T-cell (primary cell): ENCODE measurements at regions of chr10 and their contacts with region 1.

Region 1: GRCh38 chr10:77898647-77899477 is 27.7 kb downstream of the DLG5 start:
- DNase-seq: no peak
- ATAC-seq: no peak
- H3K4me3 ChIP-seq: no peak overlapping the region
- H3K4me3 Mint-ChIP-seq: no peak overlapping the region
- H3K27ac ChIP-seq: no peak overlapping the region
- H3K27ac Mint-ChIP-seq: no peak overlapping the region
- H3K4me1 ChIP-seq: no peaks in the 10 kb centered on the region
- H3K4me1 Mint-ChIP-seq: no peaks in the 10 kb centered on the region
- H3K27me3 ChIP-seq: peaks cover 0 to 5% of the 10 kb centered on the region in 2 experiments
- H3K27me3 Mint-ChIP-seq: peaks cover 0 to 5% of the 10 kb centered on the region in 2 donors

Region 2: DNA sequence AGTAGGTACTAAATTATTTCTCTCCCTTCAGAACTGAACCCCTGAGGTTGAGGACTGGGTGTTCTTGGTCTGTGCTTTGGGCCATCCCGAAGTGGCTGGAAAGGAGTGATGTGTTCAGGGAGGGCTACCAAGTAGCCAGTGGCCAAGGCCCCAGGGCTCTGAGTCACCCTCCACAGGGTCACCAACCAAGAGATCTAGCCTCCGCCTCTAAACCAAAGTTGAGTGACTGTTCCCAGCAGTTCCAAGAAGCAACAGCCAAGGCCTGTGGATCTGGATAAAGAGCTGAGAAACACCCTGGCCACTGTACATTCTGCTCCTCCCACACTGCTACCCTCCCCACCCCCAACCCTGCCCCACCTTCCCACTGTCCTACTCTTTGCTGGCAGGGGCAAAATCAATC is 225.8 kb before region 1 on chr10:
- CTCF ChIA-PET with region 1: no interaction called
- POLR2A ChIA-PET with region 1: interaction called in 1 of 2 experiments, 12 read pairs
- DNase-seq: no peak
- ATAC-seq: no peak
- H3K4me3 ChIP-seq: no peak overlapping the region
- H3K4me3 Mint-ChIP-seq: no peak overlapping the region
- H3K27ac ChIP-seq: no peak overlapping the region
- H3K27ac Mint-ChIP-seq: no peak overlapping the region
- H3K4me1 ChIP-seq: no peaks in the 10 kb centered on the region
- H3K4me1 Mint-ChIP-seq: no peaks in the 10 kb centered on the region
- H3K27me3 ChIP-seq: peaks cover 2 to 4% of the 10 kb centered on the region in 2 experiments
- H3K27me3 Mint-ChIP-seq: peaks cover 20 to 30% of the 10 kb centered on the region in 2 donors

Region 3: GRCh38 chr10:77784856-77785255 is 114.0 kb before region 1 on chr10:
- CTCF ChIA-PET with region 1: no interaction called
- POLR2A ChIA-PET with region 1: no interaction called
- DNase-seq: no peak
- ATAC-seq: no peak
- H3K4me3 ChIP-seq: no peak overlapping the region
- H3K4me3 Mint-ChIP-seq: no peak overlapping the region
- H3K27ac ChIP-seq: no peak overlapping the region
- H3K27ac Mint-ChIP-seq: no peak overlapping the region
- H3K4me1 ChIP-seq: no peaks in the 10 kb centered on the region
- H3K4me1 Mint-ChIP-seq: no peaks in the 10 kb centered on the region
- H3K27me3 ChIP-seq: no peaks in the 10 kb centered on the region
- H3K27me3 Mint-ChIP-seq: no peaks in the 10 kb centered on the region

Region 4: DNA sequence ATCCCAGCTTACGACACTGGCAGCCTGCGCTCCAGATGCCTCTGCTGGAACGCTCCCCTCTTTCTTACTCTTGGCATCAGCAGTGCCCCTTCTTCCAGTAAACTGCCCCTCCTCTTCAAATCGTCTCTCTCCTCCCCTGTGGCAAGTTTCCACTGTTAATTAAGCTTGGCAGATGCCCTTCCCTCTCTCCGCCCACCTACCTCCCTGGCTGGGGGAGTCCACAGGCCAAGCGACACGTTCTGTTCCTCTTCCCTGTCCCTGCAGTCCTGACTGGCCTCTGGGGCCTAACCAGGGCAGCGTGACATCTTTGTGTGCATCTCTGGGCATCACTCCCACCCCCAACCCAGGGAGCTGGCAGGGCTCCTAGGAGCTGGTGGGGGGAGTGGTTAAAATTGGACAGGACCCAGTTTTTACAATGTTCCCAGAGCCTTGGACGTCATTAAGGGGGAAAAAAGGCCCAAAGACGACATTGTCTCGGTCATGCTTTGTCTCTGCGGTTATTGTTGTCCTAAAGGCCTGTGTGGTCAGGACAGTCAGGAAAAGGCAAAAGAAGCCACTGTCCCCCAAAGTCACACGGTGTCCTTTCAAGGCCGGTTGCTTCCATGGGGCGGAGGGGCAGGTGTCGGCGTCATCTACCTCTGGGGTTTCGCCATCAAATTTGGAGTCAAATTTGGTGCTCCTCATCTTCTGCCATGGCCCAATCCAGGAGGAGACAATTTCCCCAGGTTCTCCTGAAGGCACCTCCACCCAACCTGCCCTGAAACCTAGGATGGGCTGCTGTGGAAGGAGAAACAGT is 26.5 kb before region 1 on chr10:
- CTCF ChIA-PET with region 1: no interaction called
- POLR2A ChIA-PET with region 1: no interaction called
- DNase-seq: no peak
- ATAC-seq: no peak
- H3K4me3 ChIP-seq: no peak overlapping the region
- H3K4me3 Mint-ChIP-seq: no peak overlapping the region
- H3K27ac ChIP-seq: no peak overlapping the region
- H3K27ac Mint-ChIP-seq: no peak overlapping the region
- H3K4me1 ChIP-seq: peaks cover 3 to 26% of the 10 kb centered on the region in 2 experiments
- H3K4me1 Mint-ChIP-seq: peaks cover 4 to 21% (median 20%) of the 10 kb centered on the region in 3 donors
- H3K27me3 ChIP-seq: no peaks in the 10 kb centered on the region
- H3K27me3 Mint-ChIP-seq: peaks cover 0 to 4% of the 10 kb centered on the region in 2 donors